T-cell (primary cell): ENCODE measurements at regions of chr6 and their contacts with region 1.

Region 1: DNA sequence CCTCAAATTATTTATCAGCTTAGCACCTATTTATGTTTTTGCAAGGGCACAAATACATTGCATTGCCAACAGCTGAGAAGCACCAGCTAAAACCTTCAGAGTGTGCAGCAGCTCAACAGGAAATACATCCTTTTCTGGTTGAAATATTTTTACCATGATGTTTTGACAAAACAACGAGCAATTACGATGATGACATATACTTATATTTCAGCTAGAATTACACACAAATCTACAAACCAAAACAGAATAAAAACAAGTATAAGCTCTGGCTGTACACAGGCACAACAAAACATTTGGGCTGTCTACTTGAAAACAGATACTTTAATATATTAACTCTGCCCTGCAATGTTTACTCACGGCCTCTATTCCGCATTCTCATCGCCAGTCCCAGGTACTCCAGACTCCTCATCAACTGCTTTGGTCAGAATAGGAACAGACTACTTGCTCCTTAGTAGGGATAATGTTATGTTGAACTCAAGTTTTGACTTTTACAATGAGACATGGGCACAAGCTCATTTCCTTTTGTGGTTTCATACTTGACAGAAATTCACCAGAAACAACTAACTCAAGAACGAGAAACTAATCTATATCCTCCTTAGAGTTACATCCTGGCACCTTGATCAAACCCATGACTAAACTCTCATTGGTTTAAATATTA is 377.6 kb downstream of the ESR1 start:
- DNase-seq: peak in 20 of 35 experiments; percentile 6 to 62 (median 26)
- ATAC-seq: peak; percentile 79 to 83 (median 81)
- H3K4me3 ChIP-seq: peak overlapping the region; percentile 54 to 58
- H3K4me3 Mint-ChIP-seq: peak overlapping the region; percentile 86 to 95 (median 91)
- H3K27ac ChIP-seq: peak overlapping the region; percentile 91
- H3K27ac Mint-ChIP-seq: peak overlapping the region; percentile 99 to 100
- H3K4me1 ChIP-seq: peaks cover 27 to 33% of the 10 kb centered on the region in 2 experiments
- H3K4me1 Mint-ChIP-seq: peaks cover 79 to 96% (median 84%) of the 10 kb centered on the region in 3 donors
- H3K27me3 ChIP-seq: no peaks in the 10 kb centered on the region
- H3K27me3 Mint-ChIP-seq: no peaks in the 10 kb centered on the region

Region 2: GRCh38 chr6:152068622-152069261 is 116.3 kb before region 1 on chr6:
- CTCF ChIA-PET with region 1: no interaction called
- POLR2A ChIA-PET with region 1: no interaction called
- DNase-seq: no peak
- ATAC-seq: no peak
- H3K4me3 ChIP-seq: no peak overlapping the region
- H3K4me3 Mint-ChIP-seq: no peak overlapping the region
- H3K27ac ChIP-seq: no peak overlapping the region
- H3K27ac Mint-ChIP-seq: no peak overlapping the region
- H3K4me1 ChIP-seq: no peaks in the 10 kb centered on the region
- H3K4me1 Mint-ChIP-seq: no peaks in the 10 kb centered on the region
- H3K27me3 ChIP-seq: no peaks in the 10 kb centered on the region
- H3K27me3 Mint-ChIP-seq: no peaks in the 10 kb centered on the region

Region 3: DNA sequence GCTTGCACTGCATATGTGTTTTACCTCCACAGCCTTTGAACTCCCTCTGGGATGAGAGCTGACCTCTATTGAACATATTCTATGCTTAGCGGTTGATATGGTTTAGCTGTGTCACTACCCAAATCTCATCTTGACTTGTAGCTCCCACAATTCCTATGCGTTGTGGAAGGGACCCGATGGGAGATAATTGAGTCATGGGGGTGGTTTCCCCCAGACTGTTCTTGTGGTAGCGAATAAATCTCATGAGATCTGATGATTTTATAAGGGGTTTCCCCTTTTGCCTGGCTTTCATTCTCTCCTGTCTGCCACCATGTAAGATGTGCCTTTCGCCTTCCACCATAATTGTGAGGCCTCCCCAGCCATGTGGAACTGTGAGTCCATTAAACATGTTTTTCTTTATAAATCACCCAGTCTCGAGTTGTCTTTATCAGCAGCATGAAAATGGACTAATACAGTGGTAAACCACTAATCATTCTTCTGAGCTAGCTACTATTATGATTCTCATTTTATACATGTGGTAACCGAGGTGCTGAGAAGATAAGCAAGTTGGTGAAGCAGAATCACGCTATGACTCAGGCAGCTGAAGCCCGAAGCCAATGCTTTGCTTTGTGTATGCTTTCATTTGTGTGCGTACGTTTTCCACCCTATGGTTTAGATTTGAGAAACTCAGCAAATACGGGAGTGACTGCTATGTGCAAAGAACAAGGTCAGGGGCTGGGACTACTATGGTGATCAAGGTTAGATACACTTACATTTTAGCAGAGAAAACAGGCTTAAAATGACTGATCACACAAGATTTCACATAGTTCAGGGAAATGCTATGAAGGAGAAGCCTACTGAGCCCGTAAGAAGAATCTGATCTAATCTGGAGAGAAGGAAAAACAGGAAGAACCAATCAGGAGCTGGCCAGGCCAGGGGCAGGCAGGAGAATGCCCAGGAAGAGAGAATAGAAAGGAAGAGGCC is 14.1 kb before region 1 on chr6:
- CTCF ChIA-PET with region 1: interaction called in 1 of 2 experiments, 17 read pairs
- POLR2A ChIA-PET with region 1: interaction called, 13 read pairs
- DNase-seq: peak in 29 of 35 experiments; percentile 13 to 76 (median 35)
- ATAC-seq: peak; percentile 86 to 95 (median 88)
- H3K4me3 ChIP-seq: peak overlapping the region in 1 of 2 donors; percentile 14
- H3K4me3 Mint-ChIP-seq: peak overlapping the region; percentile 64 to 72 (median 66)
- H3K27ac ChIP-seq: peak overlapping the region; percentile 85
- H3K27ac Mint-ChIP-seq: peak overlapping the region; percentile 96
- H3K4me1 ChIP-seq: peaks cover 0 to 21% of the 10 kb centered on the region in 2 experiments
- H3K4me1 Mint-ChIP-seq: peaks cover 54 to 61% (median 61%) of the 10 kb centered on the region in 3 donors
- H3K27me3 ChIP-seq: no peaks in the 10 kb centered on the region
- H3K27me3 Mint-ChIP-seq: no peaks in the 10 kb centered on the region

Region 4: GRCh38 chr6:152201120-152201519 is 16.1 kb after region 1 on chr6:
- CTCF ChIA-PET with region 1: interaction called, 3 to 6 read pairs
- POLR2A ChIA-PET with region 1: interaction called, 4 to 10 read pairs
- DNase-seq: no peak
- ATAC-seq: no peak
- H3K4me3 ChIP-seq: no peak overlapping the region
- H3K4me3 Mint-ChIP-seq: no peak overlapping the region
- H3K27ac ChIP-seq: no peak overlapping the region
- H3K27ac Mint-ChIP-seq: no peak overlapping the region
- H3K4me1 ChIP-seq: no peaks in the 10 kb centered on the region
- H3K4me1 Mint-ChIP-seq: peaks cover 11 to 16% (median 15%) of the 10 kb centered on the region in 3 donors
- H3K27me3 ChIP-seq: no peaks in the 10 kb centered on the region
- H3K27me3 Mint-ChIP-seq: no peaks in the 10 kb centered on the region

Region 5: DNA sequence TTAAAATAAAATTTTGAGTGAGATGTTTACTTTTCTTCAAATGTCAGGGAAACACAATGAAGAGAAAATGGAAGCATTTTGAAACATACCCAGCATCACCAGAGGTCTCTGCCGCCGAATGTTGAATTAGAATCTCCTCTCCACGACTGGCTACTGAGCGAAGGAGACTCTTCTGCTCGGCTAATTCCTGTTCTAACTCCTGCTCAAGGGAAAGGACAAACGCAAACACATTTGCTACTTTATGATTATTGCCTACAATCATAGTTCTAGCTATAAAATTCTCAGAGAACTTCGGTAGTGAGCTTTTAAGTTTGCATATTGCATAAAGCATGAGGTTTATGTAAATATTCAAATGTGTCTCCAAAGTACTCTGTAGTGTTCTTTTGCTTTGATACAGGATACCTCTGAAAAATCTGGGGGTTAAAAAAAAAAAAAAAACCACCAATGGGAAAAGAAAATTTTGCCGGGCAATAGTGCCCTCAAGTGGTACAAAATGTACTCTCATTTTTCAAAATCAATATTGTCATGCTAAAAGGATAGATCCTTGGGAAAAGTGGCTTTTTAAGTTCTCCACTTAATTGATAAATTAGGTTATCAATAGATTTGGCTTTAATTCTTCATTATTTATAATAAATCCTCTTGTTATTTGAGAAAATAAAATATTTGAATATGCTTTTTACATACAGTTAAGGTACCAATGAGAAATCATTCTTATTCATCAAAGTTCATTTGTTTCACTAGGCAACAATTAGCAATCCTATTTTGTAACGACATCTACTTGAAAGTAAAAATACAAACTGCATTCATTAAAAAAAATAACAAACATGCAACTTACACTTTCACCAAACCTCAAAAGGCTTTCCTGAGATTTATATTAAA is 83.2 kb after region 1 on chr6:
- CTCF ChIA-PET with region 1: interaction called, 3 to 10 read pairs
- POLR2A ChIA-PET with region 1: no interaction called
- DNase-seq: peak in 9 of 35 experiments; percentile 2 to 53 (median 6)
- ATAC-seq: no peak
- H3K4me3 ChIP-seq: no peak overlapping the region
- H3K4me3 Mint-ChIP-seq: no peak overlapping the region
- H3K27ac ChIP-seq: no peak overlapping the region
- H3K27ac Mint-ChIP-seq: no peak overlapping the region
- H3K4me1 ChIP-seq: no peaks in the 10 kb centered on the region
- H3K4me1 Mint-ChIP-seq: peaks cover 0 to 5% (median 0%) of the 10 kb centered on the region in 3 donors
- H3K27me3 ChIP-seq: no peaks in the 10 kb centered on the region
- H3K27me3 Mint-ChIP-seq: no peaks in the 10 kb centered on the region

Region 6: DNA sequence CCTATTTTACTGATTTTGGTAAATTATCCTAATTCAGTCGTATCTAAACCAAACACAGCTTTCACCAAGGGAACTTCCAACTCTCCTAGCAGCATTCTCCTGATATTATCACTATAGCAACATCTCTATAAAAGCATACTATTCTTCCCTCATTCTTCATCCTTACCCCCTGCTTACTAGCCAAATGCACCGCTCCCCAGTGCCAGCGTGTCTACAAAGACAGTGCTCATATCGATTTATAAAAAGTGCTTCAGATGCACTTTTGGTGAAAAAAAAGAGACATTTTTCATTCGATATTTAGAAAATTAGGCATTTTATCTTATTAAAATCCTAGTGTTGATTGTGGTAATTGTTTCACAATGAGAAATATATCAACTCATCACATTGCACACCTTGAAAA is 378.1 kb after region 1 on chr6:
- CTCF ChIA-PET with region 1: no interaction called
- POLR2A ChIA-PET with region 1: no interaction called
- DNase-seq: no peak
- ATAC-seq: no peak
- H3K4me3 ChIP-seq: no peak overlapping the region
- H3K4me3 Mint-ChIP-seq: no peak overlapping the region
- H3K27ac ChIP-seq: no peak overlapping the region
- H3K27ac Mint-ChIP-seq: no peak overlapping the region
- H3K4me1 ChIP-seq: peaks cover 0 to 5% of the 10 kb centered on the region in 2 experiments
- H3K4me1 Mint-ChIP-seq: peaks cover 0 to 1% (median 0%) of the 10 kb centered on the region in 3 donors
- H3K27me3 ChIP-seq: no peaks in the 10 kb centered on the region
- H3K27me3 Mint-ChIP-seq: peaks cover 0 to 3% of the 10 kb centered on the region in 2 donors